Dorsolateral prefrontal cortex (tissue), 120 donors: ENCODE measurements at regions of chr14 and their contacts with region 1.

Region 1: DNA sequence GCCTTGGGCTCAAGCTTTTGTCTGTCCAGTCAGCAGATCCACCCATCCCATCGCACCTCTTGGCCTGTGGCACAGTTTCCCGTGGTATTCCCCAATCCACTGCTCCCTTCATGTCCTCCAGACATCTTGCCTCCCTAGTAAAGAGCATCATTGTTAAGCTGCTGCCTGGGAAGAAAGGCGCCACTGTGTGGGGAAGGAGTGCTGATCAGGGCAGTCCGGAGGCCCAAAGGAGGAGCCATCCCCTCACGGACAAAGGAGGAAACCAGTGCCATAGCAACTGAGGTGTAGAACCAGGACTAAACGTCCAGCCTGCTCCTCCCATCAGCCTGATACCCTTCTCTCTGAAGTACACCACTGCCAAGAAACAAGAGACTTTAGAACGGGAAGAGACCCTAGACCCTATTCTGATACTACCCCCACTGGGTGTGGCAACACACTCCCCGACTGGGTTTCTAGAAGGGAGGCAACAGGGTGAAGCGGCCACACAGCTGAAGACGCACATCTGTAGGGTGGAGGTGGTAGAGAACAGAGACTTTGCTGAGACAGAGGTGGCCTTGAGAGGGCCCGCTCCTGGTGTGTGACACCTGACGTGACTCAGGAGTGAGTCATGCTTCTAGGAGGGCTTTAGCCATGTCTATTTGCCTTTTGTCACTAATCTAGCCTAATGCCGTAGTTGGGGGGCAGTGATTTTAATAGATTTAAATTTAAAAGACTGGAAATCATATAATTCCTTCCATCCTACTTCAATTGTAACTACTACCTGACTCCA is 185.0 kb downstream of the DPF3 start:
- DNase-seq: peak in 9 of 10 donors; percentile 36 to 75 (median 65)
- H3K4me3 ChIP-seq: peak overlapping the region in 2 of 59 donors; percentile 12 to 31
- H3K27ac ChIP-seq: peak overlapping the region in 53 of 59 donors; percentile 0 to 90 (median 72)
- H3K27me3 ChIP-seq: no peaks in the 10 kb centered on the region
- CTCF ChIP-seq: peak in 45 of 56 donors; percentile 4 to 71 (median 38)

Region 2: DNA sequence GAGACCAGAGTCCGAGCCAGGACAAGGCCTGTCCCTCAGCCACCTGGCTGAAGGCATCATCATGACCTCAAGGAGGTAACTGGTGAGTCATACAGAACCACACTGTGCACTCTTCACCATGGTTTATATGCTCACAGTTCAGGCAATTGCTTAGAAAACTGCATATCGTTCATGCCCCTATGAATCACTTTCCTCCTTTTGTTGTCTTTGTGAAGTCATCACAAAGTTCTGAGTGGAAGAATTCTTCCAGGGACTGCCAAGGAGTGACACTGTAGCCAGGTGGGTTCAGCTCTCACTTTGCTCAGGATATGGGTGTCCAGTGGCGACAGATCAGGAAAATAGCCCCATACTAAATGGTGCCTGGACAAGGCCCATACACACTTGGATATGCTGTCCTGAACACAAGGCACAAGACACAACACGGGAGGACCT is 92.5 kb after region 1 on chr14:
- intact Hi-C with region 1: loop called in 1 of 2 experiments (anchors 5 kb)
- DNase-seq: no peak
- H3K4me3 ChIP-seq: no peak overlapping the region
- H3K27ac ChIP-seq: peak overlapping the region in 50 of 59 donors; percentile 5 to 99 (median 94)
- H3K27me3 ChIP-seq: no peaks in the 10 kb centered on the region
- CTCF ChIP-seq: no peak